ENCODE measurements at regions of chr7 and their contacts with region 1.

Region 1: DNA sequence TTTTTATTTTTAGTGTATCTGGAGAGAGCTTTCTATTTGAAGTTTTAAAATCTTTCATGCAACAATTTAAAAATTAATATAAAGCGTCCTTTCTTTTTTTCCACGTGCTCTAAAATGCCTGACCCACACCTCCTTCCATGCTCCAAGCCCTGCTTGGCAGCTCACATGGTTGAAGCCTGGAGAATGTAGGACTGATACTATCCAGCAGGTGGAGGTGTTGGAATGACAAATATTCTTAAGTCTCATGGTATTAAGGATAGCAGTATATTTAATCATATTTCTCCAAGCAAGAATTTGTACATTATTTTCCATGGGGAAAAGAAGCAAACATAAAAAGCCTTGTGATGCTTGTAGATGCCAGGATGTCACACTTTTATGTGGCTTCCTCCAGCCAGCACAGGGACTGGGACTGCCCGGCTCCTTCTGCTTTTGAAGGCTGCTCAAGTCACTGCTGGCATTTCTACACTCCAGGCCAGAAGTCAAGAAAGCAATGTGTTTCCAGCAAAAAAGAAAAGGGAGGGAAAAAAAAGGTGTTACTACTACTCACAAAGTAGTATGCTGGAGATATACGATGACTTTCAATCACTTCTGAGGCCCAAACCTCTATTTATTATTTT is 49.7 kb downstream of the BZW2 start:
- DNase-seq: peak; percentile 35 to 63 (median 46)
- ATAC-seq: peak; percentile 94
- H3K4me3 ChIP-seq: no peak overlapping the region
- H3K27ac ChIP-seq: no peak overlapping the region
- H3K4me1 ChIP-seq: no peaks in the 10 kb centered on the region
- H3K27me3 ChIP-seq: no peaks in the 10 kb centered on the region
- CTCF ChIP-seq: peak; percentile 46 to 69 (median 59)
- EP300 ChIP-seq: no peak
- POLR2A ChIP-seq: no peak
- RAD21 ChIP-seq: peak; percentile 65 to 67

Region 2: GRCh38 chr7:16114633-16115032 is 581.1 kb before region 1 on chr7:
- CTCF ChIA-PET with region 1: no interaction called
- POLR2A ChIA-PET with region 1: no interaction called
- in situ Hi-C with region 1: no loop called
- intact Hi-C with region 1: loop called (anchors 10 kb)
- DNase-seq: peak in 2 of 4 experiments; percentile 23 to 58
- ATAC-seq: peak; percentile 83
- H3K4me3 ChIP-seq: no peak overlapping the region
- H3K27ac ChIP-seq: no peak overlapping the region; the same call in 2 of the 3 replicates
- H3K4me1 ChIP-seq: no peaks in the 10 kb centered on the region
- H3K27me3 ChIP-seq: no peaks in the 10 kb centered on the region
- CTCF ChIP-seq: peak in 2 of 3 experiments; percentile 42 to 60; a peak in 3 of 6 replicates
- EP300 ChIP-seq: no peak
- POLR2A ChIP-seq: no peak
- RAD21 ChIP-seq: peak; percentile 51 to 78

Region 3: GRCh38 chr7:16554518-16555236 is 141.1 kb before region 1 on chr7:
- CTCF ChIA-PET with region 1: no interaction called
- POLR2A ChIA-PET with region 1: no interaction called
- in situ Hi-C with region 1: no loop called
- intact Hi-C with region 1: no loop called
- DNase-seq: peak in 2 of 4 experiments; percentile 32 to 50
- ATAC-seq: peak; percentile 31
- H3K4me3 ChIP-seq: no peak overlapping the region
- H3K27ac ChIP-seq: no peak overlapping the region
- H3K4me1 ChIP-seq: peaks cover 0 to 2% of the 10 kb centered on the region in 2 experiments; a peak in 2 of 5 replicates
- H3K27me3 ChIP-seq: no peaks in the 10 kb centered on the region
- CTCF ChIP-seq: no peak
- EP300 ChIP-seq: no peak
- POLR2A ChIP-seq: no peak
- RAD21 ChIP-seq: no peak

Region 4: DNA sequence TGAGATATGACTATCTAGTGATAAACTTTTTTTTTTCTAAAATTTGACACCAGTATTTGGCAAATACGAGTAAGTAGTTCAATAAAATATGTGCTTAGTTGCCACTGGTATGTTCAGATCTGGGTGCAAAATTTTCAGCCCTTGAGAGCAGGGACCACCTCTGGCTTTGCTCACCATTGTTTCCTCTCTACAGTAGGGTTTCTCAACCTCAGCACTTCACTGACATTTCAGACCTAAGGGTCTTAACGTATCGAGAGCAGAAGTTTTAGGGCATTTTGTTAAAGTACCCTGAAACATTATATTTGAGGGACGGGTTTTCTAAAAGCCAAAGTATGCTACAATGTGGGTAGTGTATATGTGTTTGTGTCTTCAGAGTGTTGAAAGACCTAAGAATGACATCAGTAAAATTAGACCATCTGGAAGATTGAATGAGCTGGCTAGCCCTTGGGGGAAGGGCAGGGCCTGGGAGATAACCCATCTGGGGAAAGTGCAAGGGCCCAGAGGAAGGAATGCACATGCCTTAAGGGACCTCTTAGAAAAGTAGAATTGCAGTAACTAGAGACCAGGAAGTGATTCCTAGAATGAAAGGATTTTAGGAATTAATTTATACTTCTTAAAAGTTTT is 38.0 kb before region 1 on chr7:
- CTCF ChIA-PET with region 1: no interaction called
- POLR2A ChIA-PET with region 1: no interaction called
- in situ Hi-C with region 1: no loop called
- intact Hi-C with region 1: no loop called
- DNase-seq: peak; percentile 55 to 91 (median 74)
- ATAC-seq: peak; percentile 84
- H3K4me3 ChIP-seq: no peak overlapping the region
- H3K27ac ChIP-seq: peak overlapping the region; percentile 82
- H3K4me1 ChIP-seq: peaks cover 11 to 54% of the 10 kb centered on the region in 2 experiments
- H3K27me3 ChIP-seq: no peaks in the 10 kb centered on the region
- CTCF ChIP-seq: 0 out of 6 replicates have a peak, but pooled peaks of 1 of the 3 experiments have one; percentile 24
- EP300 ChIP-seq: peak; percentile 86
- POLR2A ChIP-seq: no peak
- RAD21 ChIP-seq: 0 out of 4 replicates have a peak, but pooled peaks of 1 of the 2 experiments have one; percentile 8

Region 5: DNA sequence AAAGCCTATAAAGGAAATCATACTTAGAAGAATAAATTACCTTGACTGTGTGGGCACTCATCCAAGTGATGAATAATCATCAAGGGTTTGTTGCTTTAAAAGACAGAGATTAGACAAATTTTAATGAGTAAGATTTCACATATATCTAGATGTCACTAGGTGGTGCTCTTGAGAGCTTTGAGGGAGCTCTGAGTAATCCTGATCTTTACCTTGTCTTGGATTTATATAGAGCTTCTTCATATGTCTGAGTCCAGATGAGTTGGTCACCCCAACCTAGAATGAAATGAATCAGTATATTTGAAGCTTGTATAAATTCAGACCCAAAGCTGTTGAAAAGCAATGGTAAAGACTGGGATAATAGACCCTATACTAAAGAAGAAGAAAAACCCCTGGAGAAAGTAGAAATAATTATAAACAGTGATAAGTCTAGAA is 105.4 kb after region 1 on chr7:
- CTCF ChIA-PET with region 1: no interaction called
- POLR2A ChIA-PET with region 1: no interaction called
- in situ Hi-C with region 1: no loop called
- intact Hi-C with region 1: loop called (anchors 5 kb)
- DNase-seq: peak; percentile 15 to 66 (median 38)
- ATAC-seq: peak; percentile 88
- H3K4me3 ChIP-seq: no peak overlapping the region
- H3K27ac ChIP-seq: no peak overlapping the region
- H3K4me1 ChIP-seq: peaks cover 0 to 3% of the 10 kb centered on the region in 2 experiments; a peak in 1 of 5 replicates
- H3K27me3 ChIP-seq: peaks cover 0 to 8% of the 10 kb centered on the region in 2 experiments; a peak in 3 of 5 replicates
- CTCF ChIP-seq: peak in 2 of 3 experiments; percentile 39 to 66; a peak in 4 of 6 replicates
- EP300 ChIP-seq: no peak
- POLR2A ChIP-seq: no peak
- RAD21 ChIP-seq: peak; percentile 59 to 69